MCF 10A (cell line): ENCODE measurements at regions of chr6 and their contacts with region 1.

Region 1: GRCh38 chr6:10404107-10404798 is 10.6 kb downstream of the TFAP2A start:
- DNase-seq: peak; percentile 97
- H3K4me3 Mint-ChIP-seq: peak overlapping the region; percentile 94
- H3K27ac Mint-ChIP-seq: peak overlapping the region; percentile 99
- H3K4me1 Mint-ChIP-seq: peaks cover 75% of the 10 kb centered on the region
- H3K27me3 Mint-ChIP-seq: no peaks in the 10 kb centered on the region
- CTCF ChIP-seq: peak; percentile 35

Region 2: GRCh38 chr6:10030942-10031537 is 373.2 kb before region 1 on chr6:
- CTCF ChIA-PET with region 1: interaction called, 3 read pairs
- POLR2A ChIA-PET with region 1: interaction called, 3 read pairs
- intact Hi-C with region 1: loop called (anchors 2 kb)
- DNase-seq: peak; percentile 49
- H3K4me3 Mint-ChIP-seq: no peak overlapping the region
- H3K27ac Mint-ChIP-seq: no peak overlapping the region
- H3K4me1 Mint-ChIP-seq: peaks cover 7% of the 10 kb centered on the region
- H3K27me3 Mint-ChIP-seq: no peaks in the 10 kb centered on the region
- CTCF ChIP-seq: peak; percentile 54

Region 3: DNA sequence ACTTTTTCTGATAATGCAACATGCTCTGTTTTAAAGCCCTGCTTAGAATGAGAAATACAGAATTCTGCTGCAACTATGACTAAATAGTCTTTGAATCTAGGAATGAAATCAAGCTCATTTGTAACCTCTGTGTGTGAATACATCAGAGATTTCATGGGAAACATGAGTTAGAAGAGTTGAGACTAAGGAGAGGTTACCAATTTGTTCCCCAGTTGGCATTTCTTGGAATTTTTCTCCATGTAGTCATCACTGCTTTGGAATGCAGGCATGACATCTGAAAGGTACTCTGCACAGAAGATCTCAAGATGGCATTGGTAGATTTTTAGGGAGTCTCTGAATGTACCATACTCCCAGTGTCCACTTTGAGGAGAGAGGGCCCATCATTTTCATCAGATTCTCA is 226.6 kb before region 1 on chr6:
- CTCF ChIA-PET with region 1: no interaction called
- POLR2A ChIA-PET with region 1: no interaction called
- intact Hi-C with region 1: loop called (anchors 10 kb)
- DNase-seq: peak; percentile 33
- H3K4me3 Mint-ChIP-seq: no peak overlapping the region
- H3K27ac Mint-ChIP-seq: peak overlapping the region; percentile 28
- H3K4me1 Mint-ChIP-seq: peaks cover 30% of the 10 kb centered on the region
- H3K27me3 Mint-ChIP-seq: no peaks in the 10 kb centered on the region
- CTCF ChIP-seq: no peak

Region 4: GRCh38 chr6:10310826-10311225 is 93.4 kb before region 1 on chr6:
- CTCF ChIA-PET with region 1: no interaction called
- POLR2A ChIA-PET with region 1: interaction called, 16 read pairs
- intact Hi-C with region 1: loop called (anchors 5 kb)
- DNase-seq: peak; percentile 56
- H3K4me3 Mint-ChIP-seq: peak overlapping the region; percentile 24
- H3K27ac Mint-ChIP-seq: peak overlapping the region; percentile 55
- H3K4me1 Mint-ChIP-seq: peaks cover 31% of the 10 kb centered on the region
- H3K27me3 Mint-ChIP-seq: no peaks in the 10 kb centered on the region
- CTCF ChIP-seq: no peak

Region 5: DNA sequence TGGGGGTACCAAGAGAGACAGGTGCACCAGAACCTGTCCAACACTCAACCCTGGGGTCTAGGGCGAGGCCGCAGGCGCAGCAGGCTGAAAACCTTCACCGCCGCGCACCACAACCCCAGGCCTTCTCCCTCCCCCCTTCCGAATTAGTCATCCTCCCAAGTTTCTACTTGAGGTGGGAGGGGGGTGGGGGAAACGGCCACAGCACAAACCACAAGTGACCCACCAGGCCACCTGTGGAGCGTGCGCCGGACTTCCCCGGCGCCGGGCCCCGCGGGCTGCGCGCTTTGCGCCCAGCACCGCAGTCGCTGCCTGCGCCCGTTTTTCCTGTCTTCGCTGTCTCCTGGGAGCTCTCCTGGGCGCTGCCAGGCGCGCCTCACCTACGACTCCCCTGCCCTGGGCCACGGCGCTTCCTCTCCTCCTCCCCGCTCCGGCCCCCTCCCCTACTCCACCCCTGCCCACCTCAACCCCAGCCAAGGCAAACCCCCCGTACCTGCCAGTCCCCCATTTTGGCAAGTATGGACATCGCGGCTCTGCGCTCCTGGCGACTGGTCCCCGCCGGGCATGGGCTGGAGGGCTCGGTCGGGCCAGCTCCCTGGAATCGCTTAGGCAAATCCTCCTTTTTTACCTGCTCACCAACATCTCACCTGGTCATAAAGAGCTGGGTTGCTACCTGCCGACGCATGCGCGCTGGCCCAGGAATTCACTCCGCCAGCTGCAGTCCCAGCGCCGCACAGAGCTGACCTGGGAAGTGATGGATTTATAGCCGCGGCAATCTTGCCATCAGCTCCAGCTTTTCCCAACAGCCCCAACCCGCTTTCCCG is 14.9 kb after region 1 on chr6:
- CTCF ChIA-PET with region 1: interaction called, 41 read pairs
- POLR2A ChIA-PET with region 1: interaction called, 763 read pairs
- intact Hi-C with region 1: no loop called
- DNase-seq: peak; percentile 96
- H3K4me3 Mint-ChIP-seq: peak overlapping the region; percentile 94
- H3K27ac Mint-ChIP-seq: peak overlapping the region; percentile 99
- H3K4me1 Mint-ChIP-seq: peaks cover 24% of the 10 kb centered on the region
- H3K27me3 Mint-ChIP-seq: no peaks in the 10 kb centered on the region
- CTCF ChIP-seq: no peak

Region 6: DNA sequence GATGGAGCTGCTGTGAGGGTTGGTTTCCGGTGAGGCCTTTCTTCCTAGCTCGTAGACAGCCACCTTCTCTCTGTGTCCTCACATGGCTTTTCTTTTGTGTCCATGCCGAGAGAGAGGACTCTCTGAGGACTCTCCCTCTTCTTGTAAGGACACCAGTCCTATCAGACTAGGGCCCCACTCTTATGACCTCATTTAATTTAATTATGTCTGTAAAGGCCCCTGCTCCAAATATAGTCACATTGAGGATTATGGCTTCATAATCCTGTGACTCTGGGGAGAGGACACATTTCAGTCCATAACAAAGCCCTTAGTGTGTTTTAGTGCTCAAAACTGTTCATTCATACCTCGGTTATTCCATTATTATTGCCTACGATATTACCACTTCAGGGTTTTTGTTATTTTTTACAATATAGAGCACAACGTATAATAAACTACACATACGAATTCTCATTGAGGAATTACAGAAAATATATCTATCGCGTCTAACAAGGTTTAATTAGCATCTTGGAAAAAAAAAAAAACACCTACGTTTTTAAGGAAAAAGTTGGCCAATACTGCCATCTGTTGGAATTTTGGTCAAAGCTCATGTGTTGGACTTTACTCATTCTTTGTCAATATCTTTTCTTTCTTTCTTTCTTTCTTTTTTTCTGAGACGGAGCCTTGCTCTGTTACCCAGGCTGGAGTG is 30.6 kb after region 1 on chr6:
- CTCF ChIA-PET with region 1: interaction called, 9 read pairs
- POLR2A ChIA-PET with region 1: interaction called, 763 read pairs
- intact Hi-C with region 1: no loop called
- DNase-seq: peak; percentile 71
- H3K4me3 Mint-ChIP-seq: peak overlapping the region; percentile 61
- H3K27ac Mint-ChIP-seq: peak overlapping the region; percentile 91
- H3K4me1 Mint-ChIP-seq: peaks cover 32% of the 10 kb centered on the region
- H3K27me3 Mint-ChIP-seq: no peaks in the 10 kb centered on the region
- CTCF ChIP-seq: peak; percentile 55

Region 7: DNA sequence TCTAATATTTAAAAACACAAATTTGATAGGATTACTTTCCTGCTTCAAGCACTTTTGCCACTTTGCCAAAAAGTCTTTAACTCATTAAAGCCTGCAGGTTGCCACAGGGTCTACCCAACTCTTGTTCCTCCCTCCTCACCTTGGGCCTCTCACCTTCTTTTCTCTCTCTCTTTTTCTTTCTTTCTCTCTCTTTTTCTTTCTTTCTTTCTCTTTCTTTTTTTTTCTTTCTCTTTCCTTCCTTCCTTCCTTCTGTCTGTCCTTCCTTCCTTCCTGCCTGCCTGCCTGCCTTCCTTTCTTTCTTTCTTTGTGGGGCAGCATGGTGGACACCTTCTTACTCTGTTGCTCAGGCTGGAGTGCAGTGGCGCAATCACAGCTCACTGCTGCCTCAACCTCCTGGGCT is 240.0 kb after region 1 on chr6:
- CTCF ChIA-PET with region 1: no interaction called
- POLR2A ChIA-PET with region 1: no interaction called
- intact Hi-C with region 1: no loop called
- DNase-seq: no peak
- H3K4me3 Mint-ChIP-seq: no peak overlapping the region
- H3K27ac Mint-ChIP-seq: no peak overlapping the region
- H3K4me1 Mint-ChIP-seq: no peaks in the 10 kb centered on the region
- H3K27me3 Mint-ChIP-seq: no peaks in the 10 kb centered on the region
- CTCF ChIP-seq: no peak